Activated naive CD4-positive, alpha-beta T cell treated with anti-CD3 and anti-CD28 coated beads for 36 hours (primary cell): ENCODE measurements at regions of chr6 and their contacts with region 1.

Region 1: GRCh38 chr6:108883172-108883571 is 35.0 kb downstream of the ARMC2 start:
- DNase-seq: no peak
- H3K4me3 Mint-ChIP-seq: no peak overlapping the region
- H3K27ac Mint-ChIP-seq: no peak overlapping the region
- H3K4me1 Mint-ChIP-seq: peaks cover 22% of the 10 kb centered on the region
- H3K27me3 Mint-ChIP-seq: peaks cover 13% of the 10 kb centered on the region

Region 2: DNA sequence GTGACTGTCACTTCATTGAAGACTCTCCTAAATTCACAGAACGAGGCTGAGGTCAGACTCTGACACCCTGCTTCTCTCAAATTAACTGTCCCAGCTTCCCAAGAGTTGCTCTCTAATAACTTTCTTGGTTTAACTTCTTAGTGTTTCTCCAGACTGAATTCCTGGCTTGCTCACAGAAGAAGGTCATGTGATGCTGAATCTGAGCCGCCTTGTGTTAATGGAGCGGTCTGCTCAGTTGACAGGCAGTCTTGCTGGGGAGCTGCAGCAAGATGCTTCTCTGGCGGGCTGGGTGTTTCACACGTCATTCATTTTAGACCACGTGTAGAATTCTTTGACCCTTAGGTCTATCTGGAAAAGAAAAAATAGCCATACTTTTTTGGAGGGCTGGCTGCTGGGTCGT is 215.2 kb before region 1 on chr6:
- CTCF ChIA-PET with region 1: no interaction called
- intact Hi-C with region 1: loop called (anchors 2 kb)
- DNase-seq: no peak
- H3K4me3 Mint-ChIP-seq: no peak overlapping the region
- H3K27ac Mint-ChIP-seq: no peak overlapping the region
- H3K4me1 Mint-ChIP-seq: peaks cover 44% of the 10 kb centered on the region
- H3K27me3 Mint-ChIP-seq: no peaks in the 10 kb centered on the region

Region 3: DNA sequence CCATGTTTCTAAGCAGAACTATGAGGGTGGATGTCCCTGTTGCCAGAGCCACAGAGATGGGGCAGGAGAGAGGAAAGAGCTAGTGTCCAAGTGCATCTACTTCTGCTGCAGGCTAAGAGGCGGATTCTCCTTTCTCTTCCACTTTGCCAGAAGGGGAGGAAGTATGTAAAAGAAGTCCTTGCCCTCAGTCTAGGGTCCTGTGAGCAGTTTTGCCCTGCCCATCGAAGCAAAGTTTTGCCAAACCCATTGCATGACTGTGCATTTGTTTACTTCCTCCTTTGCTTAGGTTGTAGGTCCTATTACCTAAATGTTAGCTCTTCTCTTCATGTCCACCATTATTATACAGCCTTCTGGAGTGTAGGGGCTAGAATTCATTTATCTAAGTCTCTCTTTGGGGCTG is 141.1 kb before region 1 on chr6:
- CTCF ChIA-PET with region 1: no interaction called
- intact Hi-C with region 1: no loop called
- DNase-seq: no peak
- H3K4me3 Mint-ChIP-seq: no peak overlapping the region
- H3K27ac Mint-ChIP-seq: no peak overlapping the region
- H3K4me1 Mint-ChIP-seq: no peaks in the 10 kb centered on the region
- H3K27me3 Mint-ChIP-seq: peaks cover 4% of the 10 kb centered on the region

Region 4: DNA sequence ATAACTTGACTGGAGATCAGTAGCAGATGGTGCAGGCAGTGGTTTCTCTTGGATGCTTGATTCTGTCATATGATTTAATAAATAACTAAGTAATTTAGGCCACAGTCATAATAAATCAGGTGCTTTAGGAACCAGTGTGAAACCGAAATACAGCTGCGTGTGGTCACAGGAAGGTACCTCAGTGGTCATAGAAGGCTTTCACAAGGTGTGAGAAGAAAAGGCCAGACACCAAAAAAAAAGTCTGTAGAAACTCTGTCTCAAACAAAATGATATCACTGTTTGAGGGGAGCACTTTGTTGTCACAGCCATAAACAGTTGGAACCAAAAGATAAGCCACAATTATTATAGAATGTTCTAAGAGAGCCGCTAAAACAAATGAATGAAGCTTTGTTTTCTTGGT is 21.6 kb after region 1 on chr6:
- CTCF ChIA-PET with region 1: no interaction called
- intact Hi-C with region 1: loop called (anchors 1 kb)
- DNase-seq: no peak
- H3K4me3 Mint-ChIP-seq: no peak overlapping the region
- H3K27ac Mint-ChIP-seq: no peak overlapping the region
- H3K4me1 Mint-ChIP-seq: peaks cover 14% of the 10 kb centered on the region
- H3K27me3 Mint-ChIP-seq: no peaks in the 10 kb centered on the region

Region 5: DNA sequence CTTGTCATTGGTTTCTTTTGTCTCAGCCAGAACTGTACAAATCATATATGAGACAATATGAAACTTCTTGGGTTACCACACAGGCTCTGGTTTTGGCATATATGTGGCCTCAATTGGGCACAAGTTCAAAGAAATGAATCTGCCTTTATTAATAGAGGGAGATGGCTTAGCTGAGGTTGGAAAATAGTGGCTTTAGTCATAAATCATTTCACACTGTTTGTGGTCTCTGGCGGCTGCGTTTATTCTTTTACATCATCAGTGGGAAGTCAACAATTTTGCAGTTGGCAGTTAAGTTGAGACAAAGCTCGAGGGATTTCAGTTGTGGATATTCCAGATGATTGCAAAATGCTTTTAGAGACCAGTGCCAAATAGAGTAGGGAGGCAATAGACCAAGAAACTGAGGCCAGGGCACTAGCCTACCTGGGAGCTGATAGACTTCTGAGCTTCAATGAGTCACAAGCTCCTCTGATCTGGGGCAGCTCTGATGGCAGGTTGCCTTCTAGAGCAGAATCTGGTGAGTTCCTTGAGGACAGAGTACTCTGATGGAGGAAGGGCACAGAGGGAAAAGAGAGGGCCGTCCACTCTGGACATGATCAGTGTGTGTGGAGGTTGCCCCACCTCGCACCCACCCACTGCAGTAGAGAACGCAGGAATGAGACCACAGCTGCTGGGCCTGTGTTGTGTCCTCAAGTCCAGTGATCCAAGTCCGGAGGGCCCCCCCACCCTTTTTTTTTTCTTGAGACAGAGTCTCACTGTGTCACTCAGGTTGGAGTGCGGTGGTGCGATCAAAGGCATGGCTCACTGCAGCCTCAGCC is 38.6 kb after region 1 on chr6:
- CTCF ChIA-PET with region 1: no interaction called
- intact Hi-C with region 1: loop called (anchors 1 kb)
- DNase-seq: peak; percentile 43
- H3K4me3 Mint-ChIP-seq: no peak overlapping the region
- H3K27ac Mint-ChIP-seq: no peak overlapping the region
- H3K4me1 Mint-ChIP-seq: peaks cover 27% of the 10 kb centered on the region
- H3K27me3 Mint-ChIP-seq: no peaks in the 10 kb centered on the region